ENCODE measurements at regions of chr6 and their contacts with region 1.

Region 1: DNA sequence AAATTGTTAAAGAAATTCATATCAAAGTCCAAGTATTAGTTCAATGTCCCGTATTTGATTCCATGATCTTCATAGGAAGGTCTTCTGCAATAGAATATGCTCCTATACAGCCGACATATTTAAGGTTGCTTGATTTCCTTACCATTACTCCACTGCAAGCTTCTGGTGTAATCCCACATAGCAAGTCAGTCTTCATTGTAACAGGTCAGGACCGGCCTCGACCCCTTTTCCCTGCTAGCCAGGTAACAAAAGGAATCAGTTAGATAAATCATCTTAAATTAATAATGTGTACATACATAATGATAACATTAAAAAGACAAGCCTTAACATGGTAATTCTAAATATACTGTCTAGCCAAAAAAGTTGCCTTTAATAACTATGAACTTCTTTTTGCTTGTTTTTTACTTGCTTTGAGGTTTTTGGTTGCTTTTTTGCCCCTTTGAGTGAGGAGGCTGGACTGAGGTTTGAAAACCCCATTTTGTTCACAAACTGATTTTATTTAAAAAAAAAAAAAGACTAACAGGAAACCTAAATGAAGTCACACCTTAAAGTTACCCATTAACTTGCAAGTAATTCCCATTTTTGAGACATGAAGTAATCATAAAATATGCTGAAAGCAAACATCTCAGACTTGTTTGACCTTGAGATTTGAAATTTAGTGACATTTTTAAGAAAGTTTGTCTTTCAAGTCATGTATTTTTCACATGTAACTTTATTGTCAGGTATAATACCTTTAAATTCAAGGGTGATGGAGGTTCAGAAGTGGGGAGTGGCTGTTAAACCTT is 19.2 kb upstream of the SNX14 start:
- DNase-seq: no peak
- ATAC-seq: no peak
- H3K4me3 Mint-ChIP-seq: no peak overlapping the region
- H3K27ac Mint-ChIP-seq: no peak overlapping the region
- H3K4me1 Mint-ChIP-seq: peaks cover 8% of the 10 kb centered on the region
- H3K27me3 Mint-ChIP-seq: no peaks in the 10 kb centered on the region
- CTCF ChIP-seq: no peak

Region 2: GRCh38 chr6:85593438-85594196 is 19.3 kb before region 1 on chr6 and contains the start of gene SNX14:
- CTCF ChIA-PET with region 1: interaction called, 4 read pairs
- POLR2A ChIA-PET with region 1: interaction called, 15 read pairs
- intact Hi-C with region 1: no loop called
- DNase-seq: peak; percentile 88
- ATAC-seq: peak; percentile 84
- H3K4me3 Mint-ChIP-seq: peak within 1 kb of the TSS; percentile 99
- H3K27ac Mint-ChIP-seq: peak within 1 kb of the TSS; percentile 97
- H3K4me1 Mint-ChIP-seq: peaks cover 43% of the 10 kb centered on the region
- H3K27me3 Mint-ChIP-seq: no peaks in the 10 kb centered on the region
- CTCF ChIP-seq: no peak
- total RNA-seq, gene SNX14: 53.9 to 54.1 TPM

Region 3: DNA sequence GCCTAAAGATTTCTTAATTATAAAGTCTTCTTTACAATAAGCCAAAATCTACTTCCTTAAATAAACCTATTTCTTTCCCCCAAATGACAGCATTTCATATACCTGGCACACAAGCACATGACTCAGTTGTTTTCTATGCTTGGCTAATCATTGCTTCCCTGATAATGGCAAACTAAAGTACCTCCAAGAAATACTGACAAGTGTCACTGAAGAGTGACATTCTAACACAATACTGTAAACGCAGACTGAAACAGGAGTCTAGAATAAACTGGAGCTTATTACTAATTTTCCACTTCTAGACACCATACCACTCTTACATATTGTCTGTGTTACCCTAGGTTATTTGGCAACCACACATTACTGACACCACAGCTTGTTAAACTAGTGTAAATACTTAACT is 15.5 kb after region 1 on chr6:
- CTCF ChIA-PET with region 1: interaction called, 3 read pairs
- POLR2A ChIA-PET with region 1: interaction called, 13 read pairs
- intact Hi-C with region 1: no loop called
- DNase-seq: no peak
- ATAC-seq: no peak
- H3K4me3 Mint-ChIP-seq: no peak overlapping the region
- H3K27ac Mint-ChIP-seq: peak overlapping the region; percentile 30
- H3K4me1 Mint-ChIP-seq: peaks cover 61% of the 10 kb centered on the region
- H3K27me3 Mint-ChIP-seq: no peaks in the 10 kb centered on the region
- CTCF ChIP-seq: no peak

Region 4: DNA sequence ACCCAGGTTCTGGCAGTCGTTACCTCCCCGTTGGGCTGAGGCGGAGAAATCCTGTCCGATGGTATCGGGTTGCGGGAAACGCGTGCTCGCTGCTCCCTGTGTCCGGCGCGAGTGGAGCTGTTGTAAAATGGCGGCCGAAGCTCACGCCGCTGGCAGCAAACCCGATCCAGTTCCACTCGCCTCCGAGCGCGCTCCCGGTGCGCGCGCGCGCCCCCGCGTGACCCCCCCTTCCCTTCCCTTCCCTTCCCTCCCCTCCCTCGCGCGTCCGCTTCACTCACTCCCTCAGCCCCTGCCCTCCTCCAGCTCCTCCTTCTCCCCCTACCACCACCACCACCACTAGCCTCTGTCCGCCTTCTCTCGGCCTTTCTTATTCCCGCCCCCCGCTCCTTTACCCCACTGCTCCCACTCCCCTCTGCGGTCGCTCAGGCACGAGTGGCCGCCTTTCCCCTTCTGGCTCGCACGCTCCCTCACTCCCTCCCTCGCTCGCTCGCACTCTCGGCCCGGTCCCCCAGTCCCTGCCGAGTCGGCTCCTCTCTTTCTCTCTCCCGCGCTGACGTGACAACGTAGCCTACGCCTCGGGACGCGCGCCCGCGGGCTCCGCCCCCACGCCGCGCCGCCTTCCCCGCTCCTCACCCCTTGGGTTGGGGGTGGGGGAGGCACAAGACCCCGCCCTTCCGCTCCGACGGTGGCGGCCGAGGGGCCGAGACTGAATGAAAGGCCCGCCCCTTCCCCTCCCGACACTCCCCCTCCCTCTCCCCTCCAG is 30.1 kb after region 1 on chr6 and contains the start of gene SYNCRIP:
- CTCF ChIA-PET with region 1: interaction called, 7 read pairs
- POLR2A ChIA-PET with region 1: interaction called, 10 read pairs
- intact Hi-C with region 1: no loop called
- DNase-seq: peak; percentile 97
- ATAC-seq: peak; percentile 88
- H3K4me3 Mint-ChIP-seq: peak within 1 kb of the TSS; percentile 96
- H3K27ac Mint-ChIP-seq: peak within 1 kb of the TSS; percentile 99
- H3K4me1 Mint-ChIP-seq: peaks cover 36% of the 10 kb centered on the region
- H3K27me3 Mint-ChIP-seq: no peaks in the 10 kb centered on the region
- CTCF ChIP-seq: no peak
- total RNA-seq, gene SYNCRIP: 167 to 179 TPM